Activated naive CD4-positive, alpha-beta T cell treated with anti-CD3 and anti-CD28 coated beads, Interleukin-2, amount 10 ng/mL, durations not matched to agents 7 days and 5 days (primary cell): ENCODE measurements at regions of chr10 and their contacts with region 1.

Region 1: DNA sequence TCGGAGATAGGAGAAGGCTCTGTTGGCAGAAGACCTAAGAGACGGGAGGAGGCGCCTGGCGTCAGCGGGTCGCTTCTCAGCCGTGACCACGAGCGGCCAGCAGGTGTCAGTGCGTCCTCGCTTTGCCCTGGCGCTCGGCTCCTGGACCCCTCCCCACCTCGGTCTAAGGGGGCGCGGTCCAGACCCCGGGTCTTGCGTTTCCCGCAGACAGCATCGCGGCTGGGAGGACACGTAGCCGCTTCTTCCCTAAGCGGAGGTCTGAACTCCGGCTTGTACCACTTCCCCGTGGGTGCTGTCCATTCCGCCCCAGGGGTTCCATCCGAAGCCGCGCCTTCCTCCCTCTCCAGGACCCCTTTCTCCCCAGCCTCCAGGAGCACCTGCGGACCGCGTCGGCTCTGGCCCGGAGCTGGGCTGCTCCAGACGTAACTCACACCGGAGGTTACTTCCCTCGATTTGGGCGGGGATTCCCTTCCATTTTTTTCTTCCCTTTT is 593 bp upstream of the ADRA2A start:
- DNase-seq: peak; percentile 65
- H3K4me3 Mint-ChIP-seq: peak overlapping the region; percentile 41
- H3K27ac Mint-ChIP-seq: no peak overlapping the region
- H3K4me1 Mint-ChIP-seq: peaks cover 19% of the 10 kb centered on the region
- H3K27me3 Mint-ChIP-seq: peaks cover 76% of the 10 kb centered on the region

Region 2: GRCh38 chr10:111598436-111599059 is 522.3 kb after region 1 on chr10:
- CTCF ChIA-PET with region 1: interaction called, 17 read pairs
- DNase-seq: peak; percentile 62
- H3K4me3 Mint-ChIP-seq: no peak overlapping the region
- H3K27ac Mint-ChIP-seq: no peak overlapping the region
- H3K4me1 Mint-ChIP-seq: no peaks in the 10 kb centered on the region
- H3K27me3 Mint-ChIP-seq: no peaks in the 10 kb centered on the region